HCT116 (cell line): ENCODE measurements at regions of chr6 and their contacts with region 1.

Region 1: DNA sequence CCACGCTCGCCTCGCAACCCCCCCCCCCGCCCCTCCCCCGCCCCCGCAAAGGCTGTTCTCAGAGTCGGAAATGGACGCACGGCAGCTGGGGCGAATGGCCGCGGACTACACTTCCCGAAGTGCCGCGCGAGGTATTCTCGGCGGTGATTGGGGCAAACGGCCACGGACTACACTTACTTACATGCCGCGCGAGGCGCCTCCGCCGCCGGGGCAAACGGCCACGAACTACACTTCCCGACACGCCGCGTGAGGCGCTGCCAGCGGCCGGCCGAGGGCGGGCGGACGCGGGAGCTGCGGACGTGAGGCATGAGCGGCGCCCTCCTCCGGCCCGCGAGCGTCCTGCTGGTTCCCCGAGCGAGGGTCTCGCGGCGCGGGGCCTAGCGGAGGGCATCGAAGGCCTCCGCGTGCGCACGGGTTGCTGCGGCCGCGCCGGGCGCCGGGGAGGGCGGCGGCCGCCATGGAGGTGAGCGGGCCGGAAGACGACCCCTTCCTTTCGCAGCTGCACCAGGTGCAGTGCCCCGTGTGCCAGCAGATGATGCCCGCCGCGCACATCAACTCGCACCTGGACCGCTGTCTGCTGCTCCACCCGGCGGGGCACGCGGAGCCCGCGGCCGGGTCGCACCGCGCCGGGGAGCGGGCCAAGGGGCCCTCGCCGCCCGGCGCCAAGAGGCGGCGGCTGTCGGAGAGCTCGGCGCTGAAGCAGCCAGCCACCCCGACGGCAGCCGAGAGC is at the start of gene WRNIP1:
- DNase-seq: peak; percentile 97
- ATAC-seq: peak; percentile 91
- H3K4me3 ChIP-seq: peak within 1 kb of the TSS; percentile 86 to 95
- H3K27ac ChIP-seq: peak within 1 kb of the TSS; percentile 97
- H3K4me1 ChIP-seq: peaks cover 18 to 28% of the 10 kb centered on the region in 2 experiments
- H3K27me3 ChIP-seq: no peaks in the 10 kb centered on the region
- CTCF ChIP-seq: peak; percentile 10 to 65 (median 38); a peak in 4 of 6 replicates
- POLR2A ChIP-seq: peak; percentile 38
- RAD21 ChIP-seq: no peak
- total RNA-seq, gene WRNIP1: 78.8 TPM

Region 2: DNA sequence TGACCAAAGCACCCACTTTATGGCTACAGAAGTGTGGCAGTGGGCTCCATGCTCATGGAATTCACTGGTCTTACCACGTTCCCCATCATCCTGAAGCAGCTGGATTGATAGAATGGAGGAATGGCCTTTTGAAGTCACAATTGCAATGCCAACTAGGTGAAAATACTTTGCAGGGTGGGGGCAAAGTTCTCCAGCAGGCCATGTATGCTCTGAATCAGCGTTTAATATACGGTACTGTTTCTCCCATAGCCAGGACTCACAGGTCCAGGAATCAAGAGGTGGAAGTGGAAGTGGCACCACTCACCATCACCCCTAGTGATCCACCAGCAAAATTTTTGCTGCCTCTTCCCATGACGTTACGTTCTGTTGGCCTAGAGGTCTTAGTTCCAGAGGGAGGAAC is 459.4 kb before region 1 on chr6:
- CTCF ChIA-PET with region 1: no interaction called
- POLR2A ChIA-PET with region 1: no interaction called
- RAD21 ChIA-PET with region 1: no interaction called
- intact Hi-C with region 1: no loop called
- DNase-seq: no peak
- ATAC-seq: no peak
- H3K4me3 ChIP-seq: no peak overlapping the region
- H3K27ac ChIP-seq: no peak overlapping the region
- H3K4me1 ChIP-seq: no peaks in the 10 kb centered on the region
- H3K27me3 ChIP-seq: no peaks in the 10 kb centered on the region
- CTCF ChIP-seq: no peak
- POLR2A ChIP-seq: no peak
- RAD21 ChIP-seq: no peak

Region 3: DNA sequence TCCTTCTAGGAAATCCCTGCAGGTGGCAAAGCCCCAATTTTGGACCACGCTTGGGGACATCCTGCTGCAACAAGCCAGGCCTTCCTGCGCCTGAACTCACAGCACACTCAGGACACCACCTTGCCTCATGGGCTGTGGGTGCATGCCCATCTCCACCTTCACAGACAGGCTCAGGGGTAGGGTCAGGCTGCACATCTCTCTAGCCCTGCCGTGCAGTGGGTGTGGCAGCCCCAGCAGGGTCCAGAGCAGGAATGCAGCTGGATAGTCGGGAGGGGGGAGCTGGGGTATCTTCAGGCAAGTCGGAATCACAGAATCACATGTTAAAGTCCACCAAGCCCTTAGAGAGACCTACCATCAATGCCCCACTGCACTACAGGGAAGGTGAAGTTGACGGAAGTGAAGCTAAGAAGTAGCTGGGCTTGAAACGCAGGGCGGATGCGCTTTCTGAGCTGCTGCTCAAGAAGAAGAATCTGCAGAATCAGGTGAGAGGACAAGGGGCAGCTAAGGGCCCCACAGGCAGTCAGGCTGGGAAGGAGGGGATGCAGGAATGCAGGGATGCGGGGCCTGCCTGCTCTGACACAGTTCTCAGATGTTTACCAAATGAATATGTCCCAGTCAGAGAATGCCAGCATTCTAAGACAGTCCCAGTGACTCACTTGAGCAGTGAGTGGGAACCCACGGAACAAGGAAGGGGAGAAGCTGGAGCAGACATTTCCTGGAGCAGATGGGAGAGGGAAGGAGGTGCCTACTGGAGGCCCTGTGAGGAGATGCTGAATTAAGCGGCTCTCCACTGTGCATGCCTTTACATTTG is 194.8 kb after region 1 on chr6:
- CTCF ChIA-PET with region 1: no interaction called
- POLR2A ChIA-PET with region 1: no interaction called
- RAD21 ChIA-PET with region 1: no interaction called
- intact Hi-C with region 1: no loop called
- DNase-seq: no peak
- ATAC-seq: peak; percentile 44; the same call in 1 of the 2 replicates
- H3K4me3 ChIP-seq: no peak overlapping the region
- H3K27ac ChIP-seq: no peak overlapping the region
- H3K4me1 ChIP-seq: peaks cover 4 to 32% of the 10 kb centered on the region in 2 experiments
- H3K27me3 ChIP-seq: no peaks in the 10 kb centered on the region
- CTCF ChIP-seq: no peak
- POLR2A ChIP-seq: no peak
- RAD21 ChIP-seq: no peak

Region 4: GRCh38 chr6:3068329-3069214 is 303.2 kb after region 1 on chr6 and contains the start of gene RIPK1:
- CTCF ChIA-PET with region 1: no interaction called
- POLR2A ChIA-PET with region 1: no interaction called
- RAD21 ChIA-PET with region 1: no interaction called
- intact Hi-C with region 1: loop called (anchors 10 kb)
- DNase-seq: peak; percentile 69
- ATAC-seq: peak; percentile 81
- H3K4me3 ChIP-seq: peak within 1 kb of the TSS; percentile 68 to 87
- H3K27ac ChIP-seq: peak within 1 kb of the TSS; percentile 100
- H3K4me1 ChIP-seq: peaks cover 9 to 28% of the 10 kb centered on the region in 2 experiments
- H3K27me3 ChIP-seq: no peaks in the 10 kb centered on the region
- CTCF ChIP-seq: no peak
- POLR2A ChIP-seq: peak; percentile 74
- RAD21 ChIP-seq: peak; percentile 48
- total RNA-seq, gene RIPK1: 19.1 TPM